CD4-positive, alpha-beta T cell (primary cell): ENCODE measurements at regions of chr1 and their contacts with region 1.

Region 1: DNA sequence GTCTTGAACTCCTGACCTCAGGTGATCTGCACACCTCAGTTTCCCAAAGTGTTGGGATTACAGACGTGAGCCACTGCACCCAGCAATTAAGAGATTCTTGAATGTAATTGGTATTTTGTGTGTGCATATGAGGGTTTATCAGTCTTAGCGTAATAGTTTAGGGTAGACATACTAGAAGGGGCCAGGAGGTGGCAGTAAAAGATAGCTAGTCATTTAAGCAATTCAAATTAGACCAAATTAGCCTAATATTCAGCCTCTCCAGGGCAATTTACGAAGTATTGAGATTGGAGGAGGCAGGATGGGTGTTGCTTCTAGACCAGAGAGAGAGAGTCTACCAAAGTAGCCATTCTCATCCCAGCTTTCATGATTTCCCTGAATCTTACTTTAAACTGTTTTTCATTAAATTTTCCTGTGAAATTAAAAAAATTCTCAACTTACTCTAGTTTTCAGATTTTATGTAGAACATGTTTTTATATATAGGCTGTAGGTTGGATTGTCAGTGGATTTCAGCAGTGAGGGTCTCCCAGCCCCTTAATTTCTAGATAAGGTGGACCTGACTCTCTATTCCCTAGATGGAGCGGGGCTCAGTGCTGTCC is 119.7 kb downstream of the HHAT start:
- DNase-seq: peak in 5 of 14 experiments; percentile 8 to 45 (median 35)
- ATAC-seq: no peak
- H3K4me3 ChIP-seq: no peak overlapping the region
- H3K4me3 Mint-ChIP-seq: no peak overlapping the region
- H3K27ac ChIP-seq: no peak overlapping the region
- H3K27ac Mint-ChIP-seq: peak overlapping the region; percentile 31
- H3K4me1 ChIP-seq: peaks cover 9% of the 10 kb centered on the region
- H3K4me1 Mint-ChIP-seq: peaks cover 19% of the 10 kb centered on the region
- H3K27me3 ChIP-seq: no peaks in the 10 kb centered on the region
- H3K27me3 Mint-ChIP-seq: no peaks in the 10 kb centered on the region
- CTCF ChIP-seq: peak; percentile 59

Region 2: DNA sequence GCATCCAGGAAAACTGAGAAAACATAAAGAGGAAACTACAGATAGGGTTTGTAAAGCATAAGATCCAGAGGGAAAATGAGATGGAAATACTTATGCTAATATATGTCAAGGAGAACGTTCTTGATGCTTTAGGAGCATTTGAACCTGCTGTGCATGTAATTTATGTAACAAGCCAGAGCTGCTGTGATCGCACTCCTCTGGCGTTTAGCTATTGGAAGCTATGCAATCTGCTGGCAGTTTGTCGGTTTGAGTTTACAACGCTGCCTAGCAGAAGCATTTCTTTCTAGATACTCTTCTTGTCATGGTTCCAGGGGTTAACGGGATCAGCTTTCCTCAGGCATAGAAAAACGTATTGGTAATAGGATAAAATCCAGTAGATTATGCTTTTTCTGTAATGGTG is 502.9 kb after region 1 on chr1:
- CTCF ChIA-PET with region 1: no interaction called
- POLR2A ChIA-PET with region 1: no interaction called
- intact Hi-C with region 1: loop called in 1 of 2 experiments (anchors 5 kb)
- DNase-seq: no peak
- ATAC-seq: no peak
- H3K4me3 ChIP-seq: no peak overlapping the region
- H3K4me3 Mint-ChIP-seq: no peak overlapping the region
- H3K27ac ChIP-seq: no peak overlapping the region
- H3K27ac Mint-ChIP-seq: no peak overlapping the region
- H3K4me1 ChIP-seq: no peaks in the 10 kb centered on the region
- H3K4me1 Mint-ChIP-seq: no peaks in the 10 kb centered on the region
- H3K27me3 ChIP-seq: no peaks in the 10 kb centered on the region
- H3K27me3 Mint-ChIP-seq: no peaks in the 10 kb centered on the region
- CTCF ChIP-seq: no peak

Region 3: GRCh38 chr1:211133836-211134669 is 685.7 kb after region 1 on chr1 and contains the start of gene KCNH1:
- CTCF ChIA-PET with region 1: interaction called, 4 read pairs
- POLR2A ChIA-PET with region 1: no interaction called
- intact Hi-C with region 1: loop called in 1 of 2 experiments (anchors 2 kb)
- DNase-seq: peak; percentile 52 to 87 (median 66)
- ATAC-seq: peak; percentile 88
- H3K4me3 ChIP-seq: peak within 1 kb of the TSS; percentile 51
- H3K4me3 Mint-ChIP-seq: peak within 1 kb of the TSS; percentile 71
- H3K27ac ChIP-seq: no peak within 1 kb of the TSS
- H3K27ac Mint-ChIP-seq: no peak within 1 kb of the TSS
- H3K4me1 ChIP-seq: peaks cover 18% of the 10 kb centered on the region
- H3K4me1 Mint-ChIP-seq: peaks cover 9% of the 10 kb centered on the region
- H3K27me3 ChIP-seq: peaks cover 26 to 64% of the 10 kb centered on the region in 2 experiments
- H3K27me3 Mint-ChIP-seq: peaks cover 80% of the 10 kb centered on the region
- CTCF ChIP-seq: peak; percentile 77
- total RNA-seq, gene KCNH1: not detected

Region 4: GRCh38 chr1:211258756-211259637 is 810.6 kb after region 1 on chr1 and contains the start of gene RCOR3:
- CTCF ChIA-PET with region 1: no interaction called
- POLR2A ChIA-PET with region 1: no interaction called
- intact Hi-C with region 1: loop called in 1 of 2 experiments (anchors 10 kb)
- DNase-seq: peak; percentile 88 to 95 (median 92)
- ATAC-seq: peak; percentile 76
- H3K4me3 ChIP-seq: peak within 1 kb of the TSS; percentile 89
- H3K4me3 Mint-ChIP-seq: peak within 1 kb of the TSS; percentile 94
- H3K27ac ChIP-seq: peak within 1 kb of the TSS; percentile 77 to 87
- H3K27ac Mint-ChIP-seq: peak within 1 kb of the TSS; percentile 94
- H3K4me1 ChIP-seq: peaks cover 16% of the 10 kb centered on the region
- H3K4me1 Mint-ChIP-seq: peaks cover 26% of the 10 kb centered on the region
- H3K27me3 ChIP-seq: no peaks in the 10 kb centered on the region
- H3K27me3 Mint-ChIP-seq: no peaks in the 10 kb centered on the region
- CTCF ChIP-seq: peak; percentile 59
- total RNA-seq, gene RCOR3: 55.7 to 60.5 TPM

Region 5: GRCh38 chr1:211514030-211514754 is 1065.8 kb after region 1 on chr1:
- CTCF ChIA-PET with region 1: no interaction called
- POLR2A ChIA-PET with region 1: no interaction called
- intact Hi-C with region 1: loop called in 1 of 2 experiments (anchors 10 kb)
- DNase-seq: peak; percentile 47 to 81 (median 61)
- ATAC-seq: peak; percentile 60
- H3K4me3 ChIP-seq: no peak overlapping the region
- H3K4me3 Mint-ChIP-seq: peak overlapping the region; percentile 82
- H3K27ac ChIP-seq: no peak overlapping the region
- H3K27ac Mint-ChIP-seq: no peak overlapping the region
- H3K4me1 ChIP-seq: peaks cover 20% of the 10 kb centered on the region
- H3K4me1 Mint-ChIP-seq: peaks cover 22% of the 10 kb centered on the region
- H3K27me3 ChIP-seq: no peaks in the 10 kb centered on the region
- H3K27me3 Mint-ChIP-seq: no peaks in the 10 kb centered on the region
- CTCF ChIP-seq: peak; percentile 69

Region 6: GRCh38 chr1:211654838-211655787 is 1206.7 kb after region 1 on chr1:
- CTCF ChIA-PET with region 1: no interaction called
- POLR2A ChIA-PET with region 1: no interaction called
- intact Hi-C with region 1: loop called (anchors 2 to 5 kb)
- DNase-seq: peak; percentile 68 to 88 (median 78)
- ATAC-seq: peak; percentile 98
- H3K4me3 ChIP-seq: no peak overlapping the region
- H3K4me3 Mint-ChIP-seq: no peak overlapping the region
- H3K27ac ChIP-seq: no peak overlapping the region
- H3K27ac Mint-ChIP-seq: no peak overlapping the region
- H3K4me1 ChIP-seq: peaks cover 5% of the 10 kb centered on the region
- H3K4me1 Mint-ChIP-seq: no peaks in the 10 kb centered on the region
- H3K27me3 ChIP-seq: no peaks in the 10 kb centered on the region
- H3K27me3 Mint-ChIP-seq: no peaks in the 10 kb centered on the region
- CTCF ChIP-seq: peak; percentile 89